ENCODE measurements at regions of chr14 and their contacts with region 1.

Region 1: DNA sequence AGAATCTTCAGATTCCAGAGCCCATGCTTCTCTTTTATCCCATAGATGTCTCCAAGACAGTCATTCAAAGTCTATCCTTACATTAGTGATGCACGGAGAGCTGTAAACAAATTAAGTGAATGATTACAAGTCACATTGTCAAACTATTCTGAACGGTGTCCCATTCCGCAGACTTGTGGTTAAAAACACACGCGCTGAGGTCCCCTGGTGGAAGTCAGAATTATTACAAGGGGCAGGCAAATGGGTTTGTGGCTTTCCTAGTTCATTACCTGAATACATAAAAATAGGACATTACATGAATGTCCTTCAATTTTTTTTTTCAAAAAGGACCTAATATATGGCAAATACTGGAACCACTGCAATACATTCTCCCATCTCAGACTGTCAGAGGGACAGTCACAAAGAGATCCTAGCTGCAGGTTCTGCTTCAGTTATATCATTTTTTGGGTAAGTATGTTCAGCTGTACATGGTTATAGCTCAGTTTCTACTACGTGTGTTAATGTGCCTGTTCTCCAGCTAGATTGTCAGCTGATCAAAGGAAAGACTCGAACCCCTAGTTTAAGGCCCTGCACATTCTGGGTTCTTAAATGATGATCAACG is 53.1 kb upstream of the STON2 start:
- DNase-seq: no peak
- H3K4me3 ChIP-seq: no peak overlapping the region
- H3K27ac ChIP-seq: no peak overlapping the region
- H3K4me1 ChIP-seq: peaks cover 20% of the 10 kb centered on the region
- H3K27me3 ChIP-seq: peaks cover 25% of the 10 kb centered on the region
- CTCF ChIP-seq: peak; percentile 87

Region 2: GRCh38 chr14:81269100-81269978 is 183.9 kb before region 1 on chr14:
- intact Hi-C with region 1: loop called (anchors 5 kb)
- DNase-seq: no peak
- H3K4me3 ChIP-seq: no peak overlapping the region
- H3K27ac ChIP-seq: no peak overlapping the region
- H3K4me1 ChIP-seq: peaks cover 16% of the 10 kb centered on the region
- H3K27me3 ChIP-seq: peaks cover 38% of the 10 kb centered on the region
- CTCF ChIP-seq: peak; percentile 83

Measured in left ventricle myocardium inferior (tissue), 1 donor.